T-cell (primary cell): ENCODE measurements at regions of chr5 and their contacts with region 1.

Region 1: GRCh38 chr5:117657541-117657940 is 1082.9 kb upstream of the SEMA6A start:
- DNase-seq: no peak
- ATAC-seq: no peak
- H3K4me3 ChIP-seq: no peak overlapping the region
- H3K4me3 Mint-ChIP-seq: no peak overlapping the region
- H3K27ac ChIP-seq: no peak overlapping the region
- H3K27ac Mint-ChIP-seq: no peak overlapping the region
- H3K4me1 ChIP-seq: no peaks in the 10 kb centered on the region
- H3K4me1 Mint-ChIP-seq: no peaks in the 10 kb centered on the region
- H3K27me3 ChIP-seq: no peaks in the 10 kb centered on the region
- H3K27me3 Mint-ChIP-seq: no peaks in the 10 kb centered on the region

Region 2: DNA sequence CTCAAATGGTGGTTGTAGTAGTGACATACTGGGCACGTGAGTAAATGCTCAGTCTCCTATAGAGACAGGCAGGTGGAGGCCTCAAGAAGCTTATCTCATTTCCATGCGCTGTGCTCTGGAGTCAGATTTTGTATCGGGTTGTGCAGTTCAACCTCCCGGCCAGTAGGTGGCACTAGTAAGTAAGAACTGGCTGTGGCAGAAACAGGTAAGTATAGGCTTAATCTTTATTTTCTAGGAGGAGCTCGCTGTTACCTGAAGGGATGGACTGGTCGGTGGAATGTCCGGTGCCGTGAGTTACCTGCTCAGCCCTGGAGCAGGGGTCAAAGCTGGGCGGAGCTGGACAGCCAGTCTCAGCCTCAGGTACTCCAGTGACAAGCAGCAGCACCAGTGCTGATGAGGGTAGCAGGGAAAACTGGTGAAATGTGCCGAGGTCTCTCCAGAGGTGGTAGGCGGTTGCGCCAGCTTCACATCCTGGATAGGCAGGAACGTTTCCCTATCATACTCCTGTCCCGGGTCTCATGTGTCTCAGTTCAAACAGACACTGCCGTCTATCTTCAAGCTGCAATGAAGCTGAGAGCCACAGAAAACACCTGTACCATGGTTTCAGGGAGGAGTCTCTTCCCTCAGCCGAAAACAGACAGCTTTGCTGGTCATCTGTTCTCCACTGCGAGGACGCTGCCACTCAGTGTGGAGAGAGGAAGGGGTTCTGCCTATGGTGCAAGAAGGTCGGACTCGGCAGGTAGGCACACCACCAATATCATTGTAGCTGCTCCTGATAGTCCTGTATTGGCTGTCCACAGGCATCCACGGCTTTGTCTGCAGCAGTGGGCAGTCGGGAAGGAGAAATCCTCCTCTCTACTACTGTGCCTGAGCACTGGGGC is 202.6 kb before region 1 on chr5:
- CTCF ChIA-PET with region 1: interaction called in 1 of 2 experiments, 15 read pairs
- POLR2A ChIA-PET with region 1: no interaction called
- DNase-seq: peak in 27 of 35 experiments; percentile 2 to 54 (median 16)
- ATAC-seq: peak; percentile 51 to 67 (median 58)
- H3K4me3 ChIP-seq: peak overlapping the region; percentile 30 to 52
- H3K4me3 Mint-ChIP-seq: peak overlapping the region; percentile 52 to 60 (median 59)
- H3K27ac ChIP-seq: no peak overlapping the region
- H3K27ac Mint-ChIP-seq: no peak overlapping the region
- H3K4me1 ChIP-seq: peaks cover 0 to 10% of the 10 kb centered on the region in 2 experiments
- H3K4me1 Mint-ChIP-seq: peaks cover 0 to 6% (median 6%) of the 10 kb centered on the region in 3 donors
- H3K27me3 ChIP-seq: peaks cover 0 to 8% of the 10 kb centered on the region in 2 experiments
- H3K27me3 Mint-ChIP-seq: peaks cover 0 to 4% of the 10 kb centered on the region in 2 donors

Region 3: GRCh38 chr5:117837786-117838185 is 180.2 kb after region 1 on chr5:
- CTCF ChIA-PET with region 1: no interaction called
- POLR2A ChIA-PET with region 1: no interaction called
- DNase-seq: no peak
- ATAC-seq: no peak
- H3K4me3 ChIP-seq: no peak overlapping the region
- H3K4me3 Mint-ChIP-seq: no peak overlapping the region
- H3K27ac ChIP-seq: no peak overlapping the region
- H3K27ac Mint-ChIP-seq: no peak overlapping the region
- H3K4me1 ChIP-seq: no peaks in the 10 kb centered on the region
- H3K4me1 Mint-ChIP-seq: no peaks in the 10 kb centered on the region
- H3K27me3 ChIP-seq: no peaks in the 10 kb centered on the region
- H3K27me3 Mint-ChIP-seq: no peaks in the 10 kb centered on the region

Region 4: DNA sequence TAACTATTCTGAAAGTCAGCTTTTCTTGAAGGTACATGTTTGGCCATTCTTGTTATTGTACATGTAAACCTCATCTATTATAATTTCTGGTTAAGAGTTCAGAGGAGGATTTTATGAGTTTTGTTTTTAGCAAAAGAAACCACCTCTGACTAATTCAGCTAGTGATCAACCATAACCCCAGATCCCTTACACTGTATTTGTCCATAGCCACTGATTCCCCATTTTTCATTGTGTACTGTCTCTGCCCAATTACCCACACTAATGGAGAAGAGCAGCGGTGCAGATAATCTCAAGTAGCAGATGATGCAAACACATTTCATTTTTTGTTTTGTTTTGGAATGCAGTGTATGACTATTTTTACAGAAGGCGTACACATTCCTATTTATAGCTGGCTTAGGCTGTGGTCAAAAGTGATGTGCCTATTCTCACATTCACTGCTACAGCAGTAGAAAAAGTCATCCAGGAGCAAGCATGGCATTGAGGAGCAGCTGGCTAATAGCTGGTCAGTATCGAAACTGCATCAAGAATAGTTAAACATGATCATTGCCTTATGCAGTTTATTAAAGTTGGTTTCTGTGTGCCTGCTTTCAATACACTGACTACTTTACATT is 342.5 kb after region 1 on chr5:
- CTCF ChIA-PET with region 1: no interaction called
- POLR2A ChIA-PET with region 1: no interaction called
- DNase-seq: no peak
- ATAC-seq: no peak
- H3K4me3 ChIP-seq: no peak overlapping the region
- H3K4me3 Mint-ChIP-seq: no peak overlapping the region
- H3K27ac ChIP-seq: no peak overlapping the region
- H3K27ac Mint-ChIP-seq: no peak overlapping the region
- H3K4me1 ChIP-seq: no peaks in the 10 kb centered on the region
- H3K4me1 Mint-ChIP-seq: no peaks in the 10 kb centered on the region
- H3K27me3 ChIP-seq: no peaks in the 10 kb centered on the region
- H3K27me3 Mint-ChIP-seq: no peaks in the 10 kb centered on the region